BJ (cell line): ENCODE measurements at regions of chr19 and their contacts with region 1.

Region 1: DNA sequence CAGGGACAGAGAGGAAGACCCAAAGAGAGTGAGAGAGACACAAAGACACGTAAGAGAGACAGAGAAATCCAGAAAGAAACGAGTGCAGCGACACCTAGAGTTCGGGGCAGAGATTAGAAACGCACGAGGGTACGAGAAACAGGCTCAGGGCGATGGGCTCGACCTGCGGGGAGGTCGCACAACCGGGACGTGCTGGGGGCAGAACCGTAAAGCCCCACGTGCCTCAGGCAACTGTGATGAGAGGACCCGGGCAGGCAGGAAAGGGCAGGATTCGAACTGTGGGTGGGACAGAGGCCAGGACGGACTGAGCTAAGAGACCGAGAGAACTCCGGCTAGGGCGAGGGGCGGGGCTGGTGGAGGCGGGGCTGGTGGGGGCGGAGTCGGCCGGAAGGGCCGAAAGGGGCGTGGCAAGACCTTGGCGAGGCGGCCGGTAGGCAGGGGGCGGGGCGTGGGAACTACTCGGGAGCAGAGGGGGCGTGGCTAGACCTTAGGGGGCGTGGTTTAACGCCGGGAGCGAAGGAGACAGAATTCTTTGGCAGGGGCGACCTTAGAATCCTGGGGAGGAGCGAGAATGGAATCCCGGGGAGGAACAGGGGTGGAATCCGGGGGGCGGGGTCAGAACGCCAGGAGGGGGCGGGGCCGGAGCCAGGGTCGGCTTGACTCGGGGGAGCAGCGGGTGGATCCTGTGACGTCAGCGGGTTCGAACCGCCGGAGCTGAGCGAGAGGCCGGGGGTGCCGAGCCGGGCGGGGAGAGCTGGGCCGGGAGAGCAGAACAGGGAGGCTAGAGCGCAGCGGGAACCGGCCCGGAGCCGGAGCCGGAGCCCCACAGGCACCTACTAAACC is at the start of gene NECTIN2:
- DNase-seq: peak; percentile 81
- H3K4me3 ChIP-seq: peak within 1 kb of the TSS; percentile 69
- H3K27me3 ChIP-seq: no peaks in the 10 kb centered on the region
- CTCF ChIP-seq: peak; percentile 84
- polyA plus RNA-seq, gene NECTIN2: 80.6 and 107 TPM in 2 replicates

Region 2: GRCh38 chr19:44746946-44747738 is 98.7 kb before region 1 on chr19:
- CTCF ChIA-PET with region 1: no interaction called
- POLR2A ChIA-PET with region 1: interaction called, 15 read pairs
- DNase-seq: peak; percentile 84
- H3K4me3 ChIP-seq: peak overlapping the region; percentile 73
- H3K27me3 ChIP-seq: no peaks in the 10 kb centered on the region
- CTCF ChIP-seq: no peak

Region 3: DNA sequence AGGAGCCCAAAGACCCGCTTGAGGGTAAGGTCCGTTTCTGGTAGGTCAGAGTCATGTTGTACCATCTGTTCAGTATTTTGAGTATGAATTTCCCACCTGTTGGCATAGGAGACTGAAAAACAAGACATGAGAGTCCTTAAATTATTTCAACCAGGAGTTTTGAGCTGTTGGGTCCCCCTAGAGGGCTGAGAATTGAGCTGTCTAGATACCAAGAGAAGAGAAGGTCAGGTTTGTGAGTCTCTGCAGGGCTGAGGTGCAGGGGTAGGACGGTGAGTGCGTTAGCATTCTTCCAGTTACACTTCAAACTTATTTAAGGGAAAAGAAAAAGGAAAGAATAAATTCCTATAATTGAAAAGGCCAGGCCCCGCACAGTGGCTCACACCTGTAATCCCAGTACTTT is 63.1 kb before region 1 on chr19:
- CTCF ChIA-PET with region 1: interaction called, 30 read pairs
- POLR2A ChIA-PET with region 1: no interaction called
- DNase-seq: no peak
- H3K4me3 ChIP-seq: no peak overlapping the region
- H3K27me3 ChIP-seq: no peaks in the 10 kb centered on the region
- CTCF ChIP-seq: no peak; the same call in 1 of the 2 replicates

Region 4: GRCh38 chr19:44796701-44797115 is 49.1 kb before region 1 on chr19:
- CTCF ChIA-PET with region 1: interaction called, 15 read pairs
- POLR2A ChIA-PET with region 1: no interaction called
- DNase-seq: no peak
- H3K4me3 ChIP-seq: no peak overlapping the region
- H3K27me3 ChIP-seq: no peaks in the 10 kb centered on the region
- CTCF ChIP-seq: no peak

Region 5: GRCh38 chr19:44808463-44809371 is 37.1 kb before region 1 on chr19 and contains the start of gene BCAM:
- CTCF ChIA-PET with region 1: interaction called, 12 read pairs
- POLR2A ChIA-PET with region 1: no interaction called
- DNase-seq: no peak
- H3K4me3 ChIP-seq: peak within 1 kb of the TSS; percentile 66
- H3K27me3 ChIP-seq: peaks cover 3% of the 10 kb centered on the region; the same call in 1 of the 2 replicates
- CTCF ChIP-seq: no peak
- polyA plus RNA-seq, gene BCAM: 4.7 and 8.9 TPM in 2 replicates